Activated CD8-positive, alpha-beta memory T cell treated with anti-CD3 and anti-CD28 coated beads, Interleukin-2, amount 10 ng/mL, durations not matched to agents 7 days and 5 days (primary cell): ENCODE measurements at regions of chr1 and their contacts with region 1.

Region 1: DNA sequence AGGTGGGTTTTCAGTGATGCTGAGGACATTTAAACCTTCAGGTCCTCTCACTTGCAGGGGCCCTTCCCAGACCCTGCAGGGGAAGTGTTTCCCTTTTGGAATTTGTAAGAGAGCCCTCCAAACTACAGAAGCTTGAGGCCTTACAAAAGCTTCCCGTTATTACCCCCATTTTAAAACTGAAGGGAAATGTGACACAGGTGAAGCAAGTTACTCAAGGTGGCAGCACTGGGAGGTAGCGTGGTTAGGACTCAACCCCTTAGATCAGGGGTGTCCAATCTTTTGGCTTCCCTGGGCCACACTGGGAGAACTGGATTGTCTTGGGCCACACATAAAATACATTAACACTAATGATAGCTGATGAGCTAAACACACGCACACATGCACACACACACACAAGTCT is 15.9 kb upstream of the ZC3H12A start:
- DNase-seq: no peak
- ATAC-seq: no peak
- H3K4me3 Mint-ChIP-seq: no peak overlapping the region
- H3K27ac Mint-ChIP-seq: no peak overlapping the region
- H3K4me1 Mint-ChIP-seq: peaks cover 7% of the 10 kb centered on the region
- H3K27me3 Mint-ChIP-seq: no peaks in the 10 kb centered on the region

Region 2: DNA sequence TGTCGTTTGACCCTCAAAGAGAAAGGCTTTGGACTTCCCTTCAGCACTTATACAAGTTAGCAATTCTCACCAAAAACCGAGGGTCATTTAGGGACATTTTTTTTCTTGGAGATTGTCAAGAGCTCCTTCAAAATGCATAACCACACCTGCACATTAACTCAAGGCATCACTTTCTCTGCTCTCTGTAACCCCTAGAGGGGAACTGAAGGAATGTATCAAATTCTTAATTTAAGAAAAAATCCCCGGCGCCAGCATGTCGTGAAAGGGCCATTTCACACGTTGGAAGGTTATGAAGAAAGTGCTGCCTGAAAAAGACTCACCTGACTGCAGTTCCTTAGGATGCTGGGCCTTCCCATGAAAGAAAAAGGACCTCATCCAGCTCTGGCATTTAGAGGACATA is 115.8 kb before region 1 on chr1:
- CTCF ChIA-PET with region 1: no interaction called
- DNase-seq: no peak
- ATAC-seq: no peak
- H3K4me3 Mint-ChIP-seq: no peak overlapping the region
- H3K27ac Mint-ChIP-seq: no peak overlapping the region
- H3K4me1 Mint-ChIP-seq: no peaks in the 10 kb centered on the region
- H3K27me3 Mint-ChIP-seq: no peaks in the 10 kb centered on the region

Region 3: GRCh38 chr1:37474046-37474759 is 15.7 kb after region 1 on chr1 and contains the start of gene ZC3H12A:
- CTCF ChIA-PET with region 1: interaction called, 96 read pairs
- DNase-seq: peak; percentile 92
- ATAC-seq: peak; percentile 72
- H3K4me3 Mint-ChIP-seq: peak within 1 kb of the TSS; percentile 96
- H3K27ac Mint-ChIP-seq: peak within 1 kb of the TSS; percentile 90
- H3K4me1 Mint-ChIP-seq: peaks cover 50% of the 10 kb centered on the region
- H3K27me3 Mint-ChIP-seq: no peaks in the 10 kb centered on the region
- total RNA-seq, gene ZC3H12A: 20.9 to 35.4 TPM